ENCODE measurements at regions of chr9 and their contacts with region 1.

Region 1: DNA sequence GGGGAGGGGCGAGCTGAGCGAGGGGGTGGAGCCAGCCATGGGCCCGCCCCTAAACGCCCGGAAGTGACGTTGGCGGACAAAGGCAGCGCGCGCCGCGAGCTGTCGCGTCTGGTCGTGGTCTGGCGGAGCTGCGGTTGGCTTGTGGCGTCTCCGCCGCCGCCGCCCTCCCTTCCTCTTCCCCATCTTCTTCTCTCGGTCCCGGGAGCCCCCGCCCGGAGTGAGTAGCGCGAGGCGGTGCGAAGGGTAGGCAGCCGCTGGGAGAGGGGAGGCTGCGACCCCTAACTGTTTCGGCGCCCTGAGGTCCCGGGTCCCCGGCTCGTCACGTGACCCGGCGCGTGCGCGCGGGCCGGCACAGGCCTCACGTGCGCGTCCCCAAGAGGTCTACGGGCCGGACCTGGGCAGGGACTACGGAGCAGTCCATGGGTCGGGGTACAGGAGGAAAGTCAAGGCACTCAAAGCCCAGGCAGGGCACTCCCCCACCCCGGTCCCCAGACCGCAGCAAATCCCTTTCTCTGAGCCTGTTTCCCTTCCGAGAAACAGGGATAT is at the start of gene NTMT1:
- DNase-seq: peak; percentile 75
- H3K4me3 ChIP-seq: peak within 1 kb of the TSS; percentile 49 to 100 (median 76)
- H3K27ac ChIP-seq: peak within 1 kb of the TSS; percentile 67
- H3K4me1 ChIP-seq: peaks cover 19% of the 10 kb centered on the region
- H3K27me3 ChIP-seq: no peaks in the 10 kb centered on the region
- CTCF ChIP-seq: no peak
- total RNA-seq, gene NTMT1: 15.0 to 44.6 TPM

Region 2: GRCh38 chr9:129131300-129132145 is 494.6 kb before region 1 on chr9:
- CTCF ChIA-PET with region 1: interaction called, 4 read pairs
- dilution Hi-C with region 1: loop called (anchors 5 kb)
- in situ Hi-C with region 1: loop called in 1 of 2 experiments (anchors 5 kb)
- intact Hi-C with region 1: no loop called
- DNase-seq: peak; percentile 50
- H3K4me3 ChIP-seq: no peak overlapping the region
- H3K27ac ChIP-seq: no peak overlapping the region
- H3K4me1 ChIP-seq: no peaks in the 10 kb centered on the region
- H3K27me3 ChIP-seq: no peaks in the 10 kb centered on the region
- CTCF ChIP-seq: peak; percentile 99

Region 3: DNA sequence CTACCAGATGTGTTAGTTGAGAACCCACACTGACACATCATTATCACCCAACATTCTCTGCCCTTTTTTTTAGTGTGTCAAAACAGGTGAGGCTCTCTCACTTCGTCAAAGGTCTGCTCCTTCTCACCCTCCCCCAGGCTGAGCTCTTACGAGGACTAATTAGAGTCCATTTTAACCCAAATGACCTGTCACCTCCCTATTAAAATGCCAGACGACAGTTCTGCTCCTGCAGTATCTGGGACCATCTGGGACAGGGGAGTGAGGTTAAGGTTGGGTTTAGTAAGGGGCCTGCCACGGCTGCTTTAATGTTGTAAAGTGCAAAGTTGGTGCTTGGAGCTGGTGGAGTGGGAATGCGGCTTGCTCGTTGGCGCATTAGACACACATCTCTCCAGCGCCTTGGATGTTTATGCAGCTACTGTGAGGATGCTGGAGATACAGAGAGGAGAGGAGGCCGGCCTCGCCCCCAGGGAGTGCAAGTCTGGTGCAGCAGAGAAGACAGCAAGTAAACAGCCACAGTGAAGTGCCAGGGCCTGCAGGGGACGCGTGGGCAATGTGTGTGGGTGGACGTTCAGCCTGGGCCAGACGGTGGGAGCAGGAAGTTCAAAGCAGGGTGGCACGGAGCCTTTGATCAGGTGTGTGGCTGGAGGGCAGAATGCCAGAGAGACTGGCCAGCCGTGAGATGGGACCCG is 101.4 kb before region 1 on chr9:
- CTCF ChIA-PET with region 1: no interaction called
- dilution Hi-C with region 1: loop called (anchors 5 kb)
- in situ Hi-C with region 1: no loop called
- intact Hi-C with region 1: no loop called
- DNase-seq: no peak
- H3K4me3 ChIP-seq: no peak overlapping the region
- H3K27ac ChIP-seq: no peak overlapping the region
- H3K4me1 ChIP-seq: peaks cover 3% of the 10 kb centered on the region
- H3K27me3 ChIP-seq: no peaks in the 10 kb centered on the region
- CTCF ChIP-seq: no peak

Region 4: DNA sequence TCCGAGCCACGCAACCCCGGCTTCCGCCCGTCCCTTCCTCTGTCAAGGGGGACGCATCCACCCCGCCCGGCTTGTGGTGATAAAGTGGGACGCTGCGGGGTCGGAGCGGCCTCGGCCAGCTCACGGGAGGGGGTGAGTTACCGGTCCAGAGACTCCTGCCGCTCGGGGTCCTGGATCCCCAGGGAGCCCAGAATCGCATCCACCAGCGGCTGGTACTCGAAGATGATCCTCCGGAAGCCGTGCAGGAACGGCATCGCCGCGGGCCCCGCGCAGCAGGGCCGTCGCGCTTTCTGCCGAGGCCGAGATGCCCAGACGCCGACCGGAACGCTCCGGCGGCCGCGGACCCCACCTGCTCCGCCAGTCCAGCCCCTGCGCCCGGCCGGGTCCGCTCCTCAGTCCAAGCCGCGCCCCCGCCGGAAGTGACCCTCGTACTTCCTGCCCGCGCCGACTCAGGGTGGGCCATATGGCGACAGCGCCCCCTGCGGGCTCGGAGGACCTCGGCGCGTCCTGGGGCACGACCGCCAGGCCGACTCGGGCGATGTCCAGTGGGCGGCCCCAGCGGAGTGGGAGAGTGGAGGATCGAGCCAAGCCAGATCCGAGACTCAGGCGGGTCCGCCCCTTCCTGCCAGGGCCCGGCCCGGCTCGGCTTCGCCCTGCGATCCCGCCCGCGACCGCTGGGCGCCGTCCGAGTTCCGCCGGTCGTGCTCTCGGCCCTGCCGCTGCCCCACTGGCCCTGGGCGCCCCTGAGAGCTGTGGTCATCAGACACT is 15.8 kb after region 1 on chr9 and contains the start of gene ASB6:
- CTCF ChIA-PET with region 1: interaction called, 4 read pairs
- dilution Hi-C with region 1: no loop called
- in situ Hi-C with region 1: no loop called
- intact Hi-C with region 1: loop called (anchors 2 kb)
- DNase-seq: peak; percentile 95
- H3K4me3 ChIP-seq: peak within 1 kb of the TSS; percentile 72 to 94 (median 80)
- H3K27ac ChIP-seq: peak within 1 kb of the TSS; percentile 45
- H3K4me1 ChIP-seq: peaks cover 19% of the 10 kb centered on the region
- H3K27me3 ChIP-seq: no peaks in the 10 kb centered on the region
- CTCF ChIP-seq: peak; percentile 78 to 96
- total RNA-seq, gene ASB6: 21.4 to 28.2 TPM

Region 5: DNA sequence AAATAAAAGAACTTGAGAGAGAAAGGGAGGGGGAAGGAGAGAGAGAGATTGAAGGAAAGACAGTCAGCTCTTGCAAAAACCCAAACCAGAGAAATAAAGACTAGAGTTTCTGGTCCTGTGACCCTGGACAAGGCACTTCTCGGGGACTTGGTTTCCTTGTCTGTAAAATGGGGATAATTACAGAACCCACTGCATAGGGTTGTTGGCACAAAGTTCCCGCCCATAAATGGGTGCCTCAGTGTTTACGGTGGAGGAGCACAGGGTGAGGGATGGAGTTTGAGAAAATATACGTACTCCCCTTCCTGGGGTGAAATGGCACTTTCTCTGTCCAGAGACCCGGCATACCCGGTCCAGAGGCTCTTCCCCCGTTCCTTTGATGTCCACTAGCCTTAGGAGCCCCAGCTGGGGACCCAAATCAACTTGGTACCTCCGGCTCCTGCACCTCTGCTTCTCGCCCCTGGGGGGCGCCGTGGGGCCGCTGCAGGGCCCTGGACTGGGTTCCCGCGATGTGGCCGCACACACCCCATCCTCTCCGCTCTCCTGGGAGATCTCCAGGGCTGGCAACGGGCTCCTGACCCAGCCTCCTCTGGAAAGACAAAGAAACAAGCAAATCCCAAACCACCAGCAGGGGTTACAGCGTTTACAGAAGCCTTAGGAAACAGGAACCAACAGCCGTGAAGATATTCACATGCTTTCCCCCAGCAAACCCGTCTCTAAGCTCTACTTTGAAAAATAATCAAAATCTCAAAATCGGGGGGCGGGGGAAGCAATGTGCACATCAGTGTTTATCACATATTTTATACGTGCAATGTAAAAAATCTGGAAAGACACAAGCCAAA is 100.4 kb after region 1 on chr9:
- CTCF ChIA-PET with region 1: no interaction called
- dilution Hi-C with region 1: loop called (anchors 5 kb)
- in situ Hi-C with region 1: no loop called
- intact Hi-C with region 1: no loop called
- DNase-seq: peak; percentile 45
- H3K4me3 ChIP-seq: no peak overlapping the region
- H3K27ac ChIP-seq: no peak overlapping the region
- H3K4me1 ChIP-seq: no peaks in the 10 kb centered on the region
- H3K27me3 ChIP-seq: no peaks in the 10 kb centered on the region
- CTCF ChIP-seq: peak; percentile 87 to 97

Region 6: GRCh38 chr9:129802851-129803675 is 176.9 kb after region 1 on chr9 and contains the start of gene TOR1B:
- CTCF ChIA-PET with region 1: no interaction called
- dilution Hi-C with region 1: loop called (anchors 5 kb)
- in situ Hi-C with region 1: no loop called
- intact Hi-C with region 1: no loop called
- DNase-seq: peak; percentile 88
- H3K4me3 ChIP-seq: peak within 1 kb of the TSS; percentile 62 to 78 (median 74)
- H3K27ac ChIP-seq: peak within 1 kb of the TSS; percentile 24
- H3K4me1 ChIP-seq: peaks cover 7% of the 10 kb centered on the region
- H3K27me3 ChIP-seq: no peaks in the 10 kb centered on the region
- CTCF ChIP-seq: no peak
- total RNA-seq, gene TOR1B: 19.7 to 29.2 TPM